ENCODE measurements at regions of chr9 and their contacts with region 1.

Region 1: GRCh38 chr9:73906671-73907070 is 590.5 kb upstream of the RORB start:
- DNase-seq: no peak
- ATAC-seq: no peak
- H3K4me3 ChIP-seq: no peak overlapping the region
- H3K27ac ChIP-seq: no peak overlapping the region
- H3K4me1 ChIP-seq: no peaks in the 10 kb centered on the region
- H3K27me3 ChIP-seq: no peaks in the 10 kb centered on the region
- CTCF ChIP-seq: no peak
- POLR2A ChIP-seq: no peak

Region 2: GRCh38 chr9:73962792-73963191 is 56.1 kb after region 1 on chr9:
- in situ Hi-C with region 1: loop called in 1 of 4 experiments (anchors 10 kb)
- intact Hi-C with region 1: no loop called
- DNase-seq: no peak
- ATAC-seq: no peak
- H3K4me3 ChIP-seq: no peak overlapping the region
- H3K27ac ChIP-seq: no peak overlapping the region
- H3K4me1 ChIP-seq: no peaks in the 10 kb centered on the region
- H3K27me3 ChIP-seq: no peaks in the 10 kb centered on the region
- CTCF ChIP-seq: no peak
- POLR2A ChIP-seq: no peak